ENCODE measurements at regions of chr22 and their contacts with region 1.

Region 1: DNA sequence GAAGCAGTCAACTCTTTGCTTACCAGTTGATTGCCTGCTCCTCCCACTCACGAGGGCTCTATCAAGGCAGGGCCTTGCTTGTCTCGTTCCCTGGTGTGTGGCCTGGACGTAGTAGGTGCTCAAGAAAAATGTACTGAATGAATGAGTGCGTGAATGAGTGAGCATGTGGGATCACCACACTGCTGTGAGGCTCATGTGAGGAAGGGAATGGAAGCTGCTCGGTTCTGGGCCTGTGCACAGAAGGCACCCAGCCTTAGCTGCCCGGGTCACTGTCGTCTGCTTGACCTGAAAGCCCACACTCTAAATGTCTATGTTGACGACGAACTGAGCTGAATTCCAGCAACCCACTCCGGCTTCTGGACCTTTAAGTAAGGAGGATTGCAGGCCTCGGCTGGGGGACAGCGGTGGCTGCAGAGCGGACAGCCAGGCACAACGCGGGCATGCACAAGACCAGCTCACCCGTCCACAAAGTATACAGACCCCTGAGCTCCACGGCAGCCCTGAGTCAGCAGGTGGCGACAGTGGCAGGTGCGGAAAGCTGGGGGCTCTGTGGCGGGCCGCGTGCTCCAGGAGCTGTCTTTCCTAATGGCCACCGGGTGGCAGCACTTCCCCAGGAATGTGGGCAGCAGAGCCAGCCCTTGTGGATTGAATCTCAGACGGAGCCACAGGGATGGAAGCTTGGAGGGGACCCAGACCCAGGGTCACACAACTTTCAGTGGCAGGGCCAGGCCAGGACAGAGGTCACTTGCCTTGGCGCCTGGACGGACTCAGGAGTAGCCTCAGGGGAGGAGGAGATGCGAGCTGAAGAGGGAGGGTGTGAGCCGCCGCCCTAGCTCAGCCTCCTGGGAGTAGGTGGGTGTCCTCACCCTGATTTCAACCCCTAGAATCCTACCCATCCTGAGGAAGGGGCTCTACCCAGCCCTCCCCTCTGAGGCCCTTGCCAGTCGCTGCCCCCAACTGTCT is 5.0 kb upstream of the PICK1 start:
- H3K4me3 Mint-ChIP-seq: no peak overlapping the region
- H3K27ac Mint-ChIP-seq: no peak overlapping the region
- H3K4me1 Mint-ChIP-seq: peaks cover 18% of the 10 kb centered on the region
- H3K27me3 Mint-ChIP-seq: peaks cover 62% of the 10 kb centered on the region

Region 2: GRCh38 chr22:37896181-37896592 is 156.0 kb before region 1 on chr22:
- intact Hi-C with region 1: no loop called
- H3K4me3 Mint-ChIP-seq: no peak overlapping the region
- H3K27ac Mint-ChIP-seq: no peak overlapping the region
- H3K4me1 Mint-ChIP-seq: peaks cover 16% of the 10 kb centered on the region
- H3K27me3 Mint-ChIP-seq: peaks cover under 1% of the 10 kb centered on the region

Region 3: GRCh38 chr22:38104084-38104483 is 51.9 kb after region 1 on chr22:
- intact Hi-C with region 1: loop called (anchors 2 kb)
- H3K4me3 Mint-ChIP-seq: no peak overlapping the region
- H3K27ac Mint-ChIP-seq: no peak overlapping the region
- H3K4me1 Mint-ChIP-seq: no peaks in the 10 kb centered on the region
- H3K27me3 Mint-ChIP-seq: peaks cover 33% of the 10 kb centered on the region

Measured in dendritic cell treated with granulocyte-macrophage colony-stimulating factor and Interleukin-4, amounts not matched to agents 40 ng/mL and 50 ng/mL, for 4 days (primary cell).